ENCODE measurements at regions of chr3 and their contacts with region 1.

Region 1: DNA sequence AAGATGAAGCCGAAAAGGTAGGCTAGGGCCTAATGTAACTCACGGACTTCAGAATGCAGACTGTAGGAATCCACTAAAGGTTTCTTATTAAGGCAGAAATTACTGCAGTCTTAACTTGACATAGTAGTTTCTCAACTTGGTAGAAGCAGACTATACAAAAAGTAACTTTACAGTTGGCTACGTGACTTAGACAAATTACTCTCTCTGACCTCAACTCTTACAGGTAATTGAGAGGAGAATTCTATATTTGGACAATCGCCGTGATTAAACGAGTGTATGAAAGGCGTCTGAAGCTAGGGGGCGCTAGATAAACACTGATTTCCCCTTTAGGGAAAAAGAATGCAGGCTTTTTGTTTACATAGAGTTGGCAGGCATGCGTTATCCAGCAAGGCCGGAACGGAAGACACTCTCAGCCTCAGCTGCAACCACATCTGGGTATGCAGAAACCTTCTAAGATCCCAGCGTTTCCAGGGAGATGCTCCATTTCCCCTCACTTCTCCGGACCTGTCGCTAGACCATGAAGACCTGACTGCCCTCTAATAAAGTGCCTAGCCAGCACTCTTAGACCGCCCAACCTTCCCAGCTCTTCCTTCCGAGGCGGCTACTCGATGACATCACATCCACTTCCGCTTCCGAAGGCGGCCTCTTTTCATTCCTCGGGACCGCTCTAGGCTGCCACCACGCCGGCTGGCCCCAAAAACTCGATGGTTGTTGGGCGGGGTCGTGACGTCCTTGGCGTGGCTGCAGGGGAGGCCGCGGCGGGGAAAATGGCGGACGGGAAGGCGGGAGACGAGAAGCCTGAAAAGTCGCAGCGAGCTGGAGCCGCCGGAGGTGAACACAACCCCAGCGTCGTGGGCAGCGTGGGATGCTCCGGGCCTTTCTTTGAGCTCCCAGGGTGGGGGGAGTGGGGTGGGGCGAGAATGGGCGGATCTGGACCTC is at the start of gene PCNP:
- DNase-seq: peak; percentile 100
- H3K4me3 Mint-ChIP-seq: peak within 1 kb of the TSS; percentile 95
- H3K27ac Mint-ChIP-seq: peak within 1 kb of the TSS; percentile 96
- H3K4me1 Mint-ChIP-seq: peaks cover 67% of the 10 kb centered on the region
- H3K27me3 Mint-ChIP-seq: no peaks in the 10 kb centered on the region
- total RNA-seq, gene PCNP: 261 to 267 TPM

Region 2: DNA sequence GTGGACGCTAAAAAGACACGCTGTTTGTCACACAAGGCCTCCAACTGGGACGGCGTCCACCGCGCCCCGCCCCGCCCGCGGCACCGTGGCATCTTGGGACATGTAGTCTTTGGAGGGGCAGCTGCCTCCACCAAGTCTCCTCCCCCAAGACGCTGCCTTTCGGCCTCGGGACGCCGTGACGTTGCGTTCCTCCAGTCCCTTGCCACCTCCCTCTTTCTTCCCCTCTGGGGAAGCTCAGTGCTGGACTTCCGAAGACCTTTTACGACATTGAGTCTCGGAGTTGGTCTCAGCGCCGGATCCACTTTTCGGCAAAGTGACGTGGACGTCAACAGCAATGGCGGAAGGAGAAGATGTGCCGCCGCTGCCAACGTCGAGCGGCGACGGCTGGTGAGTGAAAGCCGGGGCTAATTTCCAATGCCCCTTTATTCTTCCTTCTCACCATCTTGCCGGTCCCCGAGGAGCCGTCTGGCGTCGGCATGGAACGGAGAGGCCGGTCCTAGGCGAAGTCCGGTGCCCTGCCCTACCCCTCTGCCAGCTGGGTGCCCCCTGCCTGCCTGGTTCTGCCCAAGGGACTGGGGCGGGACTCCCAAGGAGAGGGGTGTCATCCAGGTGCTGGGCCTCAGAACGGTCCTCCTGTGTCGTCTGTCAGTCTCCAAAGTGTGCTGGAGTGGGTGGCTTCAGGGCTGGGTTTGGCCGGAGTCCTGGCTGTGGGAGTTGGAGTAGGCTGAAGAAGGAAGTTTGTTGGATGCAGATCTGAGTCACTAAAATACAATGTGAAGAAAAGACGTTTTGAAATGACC is 1312.8 kb before region 1 on chr3 and contains the start of gene TBC1D23:
- CTCF ChIA-PET with region 1: no interaction called
- intact Hi-C with region 1: loop called (anchors 5 kb)
- DNase-seq: peak; percentile 98
- H3K4me3 Mint-ChIP-seq: peak within 1 kb of the TSS; percentile 86
- H3K27ac Mint-ChIP-seq: peak within 1 kb of the TSS; percentile 89
- H3K4me1 Mint-ChIP-seq: peaks cover 59% of the 10 kb centered on the region
- H3K27me3 Mint-ChIP-seq: no peaks in the 10 kb centered on the region
- total RNA-seq, gene TBC1D23: 14.1 to 15.8 TPM

Region 3: GRCh38 chr3:101069901-101070798 is 503.6 kb before region 1 on chr3:
- CTCF ChIA-PET with region 1: no interaction called
- intact Hi-C with region 1: loop called (anchors 2 kb)
- DNase-seq: peak; percentile 84
- H3K4me3 Mint-ChIP-seq: no peak overlapping the region
- H3K27ac Mint-ChIP-seq: no peak overlapping the region
- H3K4me1 Mint-ChIP-seq: peaks cover 6% of the 10 kb centered on the region
- H3K27me3 Mint-ChIP-seq: peaks cover 17% of the 10 kb centered on the region

Region 4: DNA sequence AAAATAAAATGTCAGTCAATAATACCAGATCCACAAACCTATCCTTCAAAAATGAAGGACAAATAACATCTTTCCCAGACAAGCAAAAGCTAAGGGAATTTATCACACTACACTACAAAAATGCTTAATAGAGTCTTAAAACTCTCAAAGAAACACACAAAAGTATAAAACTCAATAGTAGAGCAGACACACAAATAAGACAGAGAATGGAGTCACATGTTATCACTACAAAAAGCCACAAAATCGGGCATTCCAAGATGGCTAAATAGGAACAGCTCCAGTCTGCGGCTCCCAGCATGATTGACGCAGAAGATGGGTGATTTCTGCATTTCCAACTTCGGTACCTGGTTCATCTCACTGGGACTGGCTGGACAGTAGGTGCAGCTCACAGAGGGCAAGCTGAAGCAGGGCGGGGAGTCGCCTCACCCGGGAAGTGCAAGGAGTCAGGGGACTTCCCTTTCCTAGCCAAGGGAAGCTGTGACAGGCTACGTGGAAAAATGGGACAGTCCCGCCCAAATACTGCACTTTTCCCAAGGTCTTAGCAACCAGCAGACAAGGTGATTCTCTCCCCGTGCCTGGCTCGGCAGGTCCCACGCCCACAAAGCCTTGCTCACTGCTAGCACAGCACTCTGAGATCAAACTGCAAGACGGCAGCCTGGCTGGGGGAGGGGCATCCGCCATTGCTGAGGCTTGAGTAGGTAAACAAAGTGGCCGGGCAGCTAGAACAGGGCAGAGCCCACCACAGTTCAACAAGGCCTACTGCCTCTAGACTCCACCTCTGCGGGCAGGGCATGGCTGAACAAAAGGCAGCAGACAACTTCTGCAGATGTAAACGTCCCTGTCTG is 107.0 kb before region 1 on chr3:
- CTCF ChIA-PET with region 1: no interaction called
- intact Hi-C with region 1: loop called (anchors 5 kb)
- DNase-seq: peak; percentile 90
- H3K4me3 Mint-ChIP-seq: peak overlapping the region; percentile 71
- H3K27ac Mint-ChIP-seq: peak overlapping the region; percentile 88
- H3K4me1 Mint-ChIP-seq: peaks cover 57% of the 10 kb centered on the region
- H3K27me3 Mint-ChIP-seq: no peaks in the 10 kb centered on the region

Region 5: DNA sequence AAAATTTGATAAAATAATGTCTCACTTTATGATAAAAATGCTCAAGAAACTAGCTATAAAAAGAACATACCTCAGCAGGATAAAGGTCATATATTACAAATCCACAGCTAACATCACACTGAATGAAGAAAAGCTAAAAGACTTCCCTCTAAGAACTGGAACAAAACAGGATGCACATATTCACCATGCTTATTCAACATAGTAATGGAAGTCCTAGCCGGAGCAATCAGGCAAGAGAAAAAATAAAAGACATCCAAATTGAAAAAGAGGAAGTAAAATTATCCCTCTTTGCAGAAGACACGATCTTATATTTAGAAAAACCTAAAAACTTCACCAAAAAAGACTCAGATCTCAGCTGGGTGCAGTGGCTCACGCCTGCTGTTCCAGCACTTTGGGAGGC is 94.7 kb before region 1 on chr3:
- CTCF ChIA-PET with region 1: no interaction called
- intact Hi-C with region 1: no loop called
- DNase-seq: no peak
- H3K4me3 Mint-ChIP-seq: no peak overlapping the region
- H3K27ac Mint-ChIP-seq: no peak overlapping the region
- H3K4me1 Mint-ChIP-seq: peaks cover 45% of the 10 kb centered on the region
- H3K27me3 Mint-ChIP-seq: no peaks in the 10 kb centered on the region

Region 6: DNA sequence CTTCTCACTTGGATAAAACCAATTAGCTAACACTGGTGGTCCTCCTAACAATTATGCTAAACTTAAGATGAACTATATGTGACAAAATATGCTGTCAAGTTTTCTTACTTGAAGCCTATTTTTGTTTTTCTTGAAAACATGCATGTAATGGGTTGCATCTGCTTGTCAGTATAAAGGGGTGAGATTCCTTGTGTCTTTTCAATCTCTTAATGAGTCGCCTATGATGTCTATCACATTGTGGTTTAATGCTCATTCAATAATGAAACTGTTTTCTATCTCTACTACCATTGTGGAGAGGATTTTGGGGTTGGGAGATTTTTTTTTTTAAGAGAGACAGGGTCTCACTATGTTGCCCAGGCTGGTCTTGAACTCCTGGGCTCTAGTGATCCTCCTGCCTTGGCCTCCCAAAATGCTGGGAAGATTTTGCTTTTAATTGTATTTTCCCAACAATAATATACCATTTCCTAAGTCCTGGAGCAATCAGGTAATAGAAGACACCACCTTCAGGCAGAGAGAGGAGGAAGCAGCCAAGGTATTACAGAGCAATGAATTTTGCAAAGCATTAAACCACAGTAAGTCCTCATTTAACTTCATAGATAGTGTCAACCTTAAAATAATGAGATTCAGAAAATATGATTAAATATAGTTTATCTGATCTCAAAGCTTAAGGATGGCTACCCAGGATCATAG is 29.4 kb before region 1 on chr3:
- CTCF ChIA-PET with region 1: no interaction called
- intact Hi-C with region 1: loop called (anchors 1 kb)
- DNase-seq: no peak
- H3K4me3 Mint-ChIP-seq: no peak overlapping the region
- H3K27ac Mint-ChIP-seq: no peak overlapping the region
- H3K4me1 Mint-ChIP-seq: peaks cover 29% of the 10 kb centered on the region
- H3K27me3 Mint-ChIP-seq: no peaks in the 10 kb centered on the region

Region 7: GRCh38 chr3:101676765-101677435 is 103.2 kb after region 1 on chr3 and contains the start of gene ZBTB11:
- CTCF ChIA-PET with region 1: interaction called, 3 read pairs
- intact Hi-C with region 1: loop called (anchors 1 kb)
- DNase-seq: peak; percentile 100
- H3K4me3 Mint-ChIP-seq: peak within 1 kb of the TSS; percentile 87
- H3K27ac Mint-ChIP-seq: peak within 1 kb of the TSS; percentile 95
- H3K4me1 Mint-ChIP-seq: peaks cover 54% of the 10 kb centered on the region
- H3K27me3 Mint-ChIP-seq: no peaks in the 10 kb centered on the region
- total RNA-seq, gene ZBTB11: 31.2 to 31.7 TPM

Region 8: GRCh38 chr3:101936419-101937356 is 363.0 kb after region 1 on chr3:
- CTCF ChIA-PET with region 1: no interaction called
- intact Hi-C with region 1: loop called (anchors 5 kb)
- DNase-seq: peak; percentile 33
- H3K4me3 Mint-ChIP-seq: peak overlapping the region; percentile 0
- H3K27ac Mint-ChIP-seq: peak overlapping the region; percentile 57
- H3K4me1 Mint-ChIP-seq: peaks cover 32% of the 10 kb centered on the region
- H3K27me3 Mint-ChIP-seq: peaks cover 2% of the 10 kb centered on the region

Region 9: DNA sequence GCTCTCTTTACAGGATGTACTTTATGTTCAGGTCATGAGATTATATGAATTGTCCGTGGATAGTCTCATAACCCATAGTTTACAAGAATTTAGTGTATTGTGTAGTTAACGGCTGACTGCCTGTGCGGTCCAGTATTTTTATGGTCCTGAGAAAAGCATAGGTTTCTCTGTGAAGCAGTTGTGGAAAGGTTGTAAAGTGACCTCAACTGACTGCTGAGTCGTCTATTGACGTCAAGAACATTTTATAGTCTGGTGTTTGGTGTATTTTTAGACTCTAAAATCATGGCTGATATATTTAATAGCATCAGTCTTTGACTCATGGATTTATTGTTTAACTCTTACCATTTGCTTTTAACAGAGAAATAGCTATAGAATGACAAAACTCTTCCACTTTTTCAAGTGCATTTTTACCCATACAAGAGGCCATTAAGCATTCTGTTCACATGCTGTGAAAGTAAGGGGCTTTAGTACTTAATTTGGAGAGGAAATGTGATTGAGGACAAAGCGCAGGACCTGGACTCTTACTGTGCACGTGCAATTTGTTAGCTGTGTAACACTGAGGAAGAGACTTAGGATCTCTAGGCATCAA is 516.3 kb after region 1 on chr3:
- CTCF ChIA-PET with region 1: no interaction called
- intact Hi-C with region 1: no loop called
- DNase-seq: no peak
- H3K4me3 Mint-ChIP-seq: no peak overlapping the region
- H3K27ac Mint-ChIP-seq: no peak overlapping the region
- H3K4me1 Mint-ChIP-seq: peaks cover 44% of the 10 kb centered on the region
- H3K27me3 Mint-ChIP-seq: no peaks in the 10 kb centered on the region